ENCODE measurements at regions of chr19 and their contacts with region 1.

Region 1: DNA sequence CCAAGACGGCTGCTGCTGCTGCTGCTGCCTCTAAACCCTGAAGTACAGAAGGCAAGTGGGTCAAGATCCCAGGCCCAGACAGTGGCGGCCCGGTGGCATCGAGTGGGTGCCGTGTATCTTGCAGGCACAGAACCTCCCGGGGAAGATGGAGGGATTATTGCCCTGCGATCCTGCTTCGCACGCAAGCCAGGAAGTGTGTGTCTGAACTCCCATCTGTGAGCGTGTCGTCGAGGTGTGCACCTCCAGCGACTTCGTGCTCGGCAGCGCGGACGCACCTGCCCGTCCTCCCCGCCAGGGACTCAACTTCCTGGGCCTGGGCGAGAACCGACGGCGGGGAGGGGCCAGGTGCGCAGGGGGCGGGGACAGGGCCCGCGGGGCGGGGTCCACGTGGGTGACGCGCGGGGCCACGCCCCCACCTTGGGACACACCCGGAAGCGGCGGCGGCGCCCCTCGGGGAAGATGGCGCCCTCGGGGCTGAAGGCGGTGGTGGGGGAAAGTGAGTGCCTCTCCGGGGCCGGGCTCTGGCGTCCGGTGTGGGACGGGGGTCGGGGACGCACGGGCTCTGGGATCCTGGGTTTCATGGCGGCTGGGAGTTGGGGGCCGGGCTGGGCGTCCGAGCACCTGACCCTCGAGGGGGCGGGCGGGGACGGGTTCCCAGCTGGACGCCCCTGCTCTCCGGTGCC is at the start of gene STXBP2:
- DNase-seq: peak; percentile 92
- ATAC-seq: peak; percentile 98
- H3K4me3 Mint-ChIP-seq: peak within 1 kb of the TSS; percentile 81
- H3K27ac Mint-ChIP-seq: peak within 1 kb of the TSS; percentile 88
- H3K4me1 Mint-ChIP-seq: peaks cover 27% of the 10 kb centered on the region
- H3K27me3 Mint-ChIP-seq: no peaks in the 10 kb centered on the region
- CTCF ChIP-seq: peak; percentile 36
- total RNA-seq, gene STXBP2: 96.4 to 99.2 TPM

Region 2: DNA sequence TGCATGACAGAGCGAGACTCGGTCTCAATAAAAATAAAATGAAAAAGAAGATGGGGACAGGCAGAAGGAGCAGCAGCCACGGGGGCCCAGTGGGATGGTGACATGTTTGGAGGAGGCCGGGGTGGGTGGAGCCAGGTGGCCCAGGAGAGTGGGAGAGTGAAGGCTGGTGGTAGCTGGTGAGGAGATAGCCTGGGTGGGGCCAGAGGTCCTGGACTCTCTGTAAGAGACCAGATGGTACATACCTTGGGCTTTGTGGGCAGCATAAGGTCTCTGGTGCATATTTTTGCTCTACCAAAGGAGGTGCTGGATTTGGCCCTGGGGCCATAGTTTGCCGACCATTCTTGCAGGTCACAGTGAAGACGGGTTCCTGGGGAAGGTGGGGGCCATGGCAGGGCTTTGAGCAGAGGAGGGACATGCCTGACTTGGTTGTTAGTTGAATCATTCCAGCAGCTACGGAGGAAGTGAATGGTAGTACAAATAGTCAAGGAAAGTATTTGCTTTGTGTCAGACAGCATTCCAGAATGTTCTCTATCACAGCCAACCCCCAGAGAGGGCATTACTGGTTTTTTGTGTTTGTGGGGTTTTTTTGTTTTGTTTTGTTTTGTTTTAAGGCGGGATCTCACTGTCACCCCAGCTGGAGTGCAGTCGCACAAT is 219.0 kb before region 1 on chr19:
- CTCF ChIA-PET with region 1: no interaction called
- POLR2A ChIA-PET with region 1: no interaction called
- intact Hi-C with region 1: no loop called
- DNase-seq: no peak
- ATAC-seq: no peak
- H3K4me3 Mint-ChIP-seq: no peak overlapping the region
- H3K27ac Mint-ChIP-seq: peak overlapping the region; percentile 63
- H3K4me1 Mint-ChIP-seq: peaks cover 17% of the 10 kb centered on the region
- H3K27me3 Mint-ChIP-seq: no peaks in the 10 kb centered on the region
- CTCF ChIP-seq: no peak

Region 3: DNA sequence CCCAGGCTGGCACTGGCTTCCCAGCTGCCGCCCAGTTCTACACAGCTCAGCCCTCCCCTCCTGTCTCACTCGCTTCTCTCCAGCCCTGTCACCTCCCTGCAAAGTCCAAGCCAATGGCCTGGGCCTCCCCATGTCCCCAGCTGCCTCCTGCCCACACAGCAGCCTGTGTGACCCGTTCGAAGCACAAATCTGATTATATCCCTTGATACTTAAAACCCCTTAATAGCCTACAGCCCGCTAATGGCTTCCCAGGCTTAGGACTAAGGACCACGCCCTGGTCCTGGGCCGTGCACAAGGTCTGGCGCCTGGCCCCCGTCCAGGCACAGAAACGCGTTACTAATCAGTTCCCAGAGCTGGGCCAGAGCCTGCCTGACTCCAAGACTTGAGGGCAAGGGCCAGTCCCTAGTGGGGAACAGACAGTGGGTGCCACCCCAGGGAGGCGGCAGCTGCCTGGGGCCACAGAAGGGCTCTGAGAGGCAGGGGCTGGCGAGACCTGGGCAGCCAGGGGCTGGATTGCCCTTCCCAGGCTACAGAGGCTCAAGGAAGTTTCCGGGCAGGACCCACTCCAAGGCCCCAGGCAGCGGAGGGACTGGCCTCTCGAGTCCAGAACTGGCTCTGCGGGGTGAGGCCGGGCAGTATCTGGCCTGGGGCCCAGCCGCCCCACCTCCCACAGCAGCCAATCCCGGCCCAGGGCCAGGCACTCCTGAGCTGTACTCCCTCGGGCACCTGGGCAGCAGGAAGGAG is 17.9 kb before region 1 on chr19:
- CTCF ChIA-PET with region 1: no interaction called
- POLR2A ChIA-PET with region 1: interaction called, 10 read pairs
- intact Hi-C with region 1: no loop called
- DNase-seq: no peak
- ATAC-seq: no peak
- H3K4me3 Mint-ChIP-seq: no peak overlapping the region
- H3K27ac Mint-ChIP-seq: no peak overlapping the region
- H3K4me1 Mint-ChIP-seq: no peaks in the 10 kb centered on the region
- H3K27me3 Mint-ChIP-seq: no peaks in the 10 kb centered on the region
- CTCF ChIP-seq: no peak

Region 4: DNA sequence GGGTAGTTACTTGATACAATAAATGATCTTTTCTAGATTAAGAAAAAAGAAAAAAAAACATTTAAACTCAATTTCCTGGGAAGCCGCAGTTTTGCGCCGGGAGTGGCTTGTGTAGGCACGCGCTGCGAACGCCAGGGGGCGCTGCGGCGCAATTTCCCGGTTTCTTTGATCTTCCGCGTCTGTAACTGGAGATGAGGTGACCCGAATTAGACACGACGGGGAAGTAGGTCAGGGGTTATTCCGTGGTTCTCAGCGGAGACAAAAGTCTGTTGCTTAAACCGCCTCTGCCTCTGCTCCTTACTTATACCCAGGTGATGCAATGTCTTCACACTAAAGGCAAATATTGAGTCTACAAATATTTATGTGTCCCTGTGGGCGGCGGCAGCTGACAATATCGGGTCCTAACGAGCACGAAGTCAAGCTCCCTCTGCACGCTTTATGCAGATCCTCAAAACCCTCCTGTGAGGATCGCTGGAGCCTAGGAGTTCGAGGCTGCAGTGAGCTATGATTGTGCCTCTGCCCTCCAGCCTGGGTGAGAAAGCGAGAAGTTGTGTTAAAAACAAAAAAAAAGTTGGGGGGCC is 15.3 kb after region 1 on chr19:
- CTCF ChIA-PET with region 1: interaction called, 6 read pairs
- POLR2A ChIA-PET with region 1: interaction called, 10 read pairs
- intact Hi-C with region 1: no loop called
- DNase-seq: peak; percentile 91
- ATAC-seq: peak; percentile 86
- H3K4me3 Mint-ChIP-seq: peak overlapping the region; percentile 59
- H3K27ac Mint-ChIP-seq: peak overlapping the region; percentile 53
- H3K4me1 Mint-ChIP-seq: peaks cover 24% of the 10 kb centered on the region
- H3K27me3 Mint-ChIP-seq: no peaks in the 10 kb centered on the region
- CTCF ChIP-seq: peak; percentile 99

Measured in activated CD8-positive, alpha-beta T cell treated with anti-CD3 and anti-CD28 coated beads for 36 hours (primary cell).